Activated CD4-positive, alpha-beta T cell treated with anti-CD3 and anti-CD28 coated beads for 36 hours (primary cell): ENCODE measurements at regions of chr16 and their contacts with region 1.

Region 1: DNA sequence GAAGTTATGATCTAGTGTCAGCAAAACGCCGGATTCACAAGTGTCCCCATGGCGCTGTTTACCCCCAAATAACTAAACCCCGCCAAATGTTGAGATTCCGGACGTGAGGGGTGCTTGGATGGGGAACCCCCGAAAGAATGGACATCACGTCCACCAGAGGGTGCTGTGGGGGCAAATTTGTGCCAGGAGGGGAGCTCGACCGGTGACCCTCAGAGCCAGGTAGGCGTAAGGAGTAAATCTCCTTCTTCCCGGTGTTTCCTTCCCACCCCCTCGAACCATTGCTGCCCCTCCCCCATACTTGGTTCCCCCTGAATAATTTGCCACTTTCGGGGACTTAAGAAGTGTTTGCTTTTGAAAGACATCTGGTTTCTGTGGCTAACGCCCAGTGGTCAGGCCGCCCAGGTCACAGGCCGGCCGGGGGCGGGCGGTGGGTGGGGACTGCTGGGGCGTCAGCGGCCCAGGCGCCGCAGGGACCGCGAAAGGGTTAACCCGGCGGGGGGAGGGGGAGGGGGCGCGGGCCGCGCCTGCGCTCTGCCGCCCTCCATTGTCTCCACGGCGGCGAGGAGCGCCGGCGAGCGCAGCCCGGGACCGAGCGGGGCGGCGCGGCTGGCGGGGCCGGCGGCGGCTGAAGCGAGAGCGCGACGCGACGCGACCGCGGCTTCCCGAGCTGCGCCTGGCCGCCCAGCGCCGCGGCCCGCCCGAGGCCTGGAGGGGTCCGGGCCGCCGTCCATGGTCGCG is at the start of gene ZNRF1:
- DNase-seq: peak; percentile 91
- ATAC-seq: peak; percentile 80
- H3K4me3 Mint-ChIP-seq: peak within 1 kb of the TSS; percentile 87
- H3K27ac Mint-ChIP-seq: peak within 1 kb of the TSS; percentile 75
- H3K4me1 Mint-ChIP-seq: peaks cover 39% of the 10 kb centered on the region
- H3K27me3 Mint-ChIP-seq: peaks cover 4% of the 10 kb centered on the region
- total RNA-seq, gene ZNRF1: 35.2 to 42.9 TPM

Region 2: GRCh38 chr16:75074920-75075687 is 76.5 kb after region 1 on chr16:
- CTCF ChIA-PET with region 1: interaction called, 6 read pairs
- POLR2A ChIA-PET with region 1: no interaction called
- intact Hi-C with region 1: loop called (anchors 1 to 2 kb)
- DNase-seq: peak; percentile 89
- ATAC-seq: peak; percentile 92
- H3K4me3 Mint-ChIP-seq: peak overlapping the region; percentile 54
- H3K27ac Mint-ChIP-seq: peak overlapping the region; percentile 97
- H3K4me1 Mint-ChIP-seq: peaks cover 62% of the 10 kb centered on the region
- H3K27me3 Mint-ChIP-seq: no peaks in the 10 kb centered on the region

Region 3: DNA sequence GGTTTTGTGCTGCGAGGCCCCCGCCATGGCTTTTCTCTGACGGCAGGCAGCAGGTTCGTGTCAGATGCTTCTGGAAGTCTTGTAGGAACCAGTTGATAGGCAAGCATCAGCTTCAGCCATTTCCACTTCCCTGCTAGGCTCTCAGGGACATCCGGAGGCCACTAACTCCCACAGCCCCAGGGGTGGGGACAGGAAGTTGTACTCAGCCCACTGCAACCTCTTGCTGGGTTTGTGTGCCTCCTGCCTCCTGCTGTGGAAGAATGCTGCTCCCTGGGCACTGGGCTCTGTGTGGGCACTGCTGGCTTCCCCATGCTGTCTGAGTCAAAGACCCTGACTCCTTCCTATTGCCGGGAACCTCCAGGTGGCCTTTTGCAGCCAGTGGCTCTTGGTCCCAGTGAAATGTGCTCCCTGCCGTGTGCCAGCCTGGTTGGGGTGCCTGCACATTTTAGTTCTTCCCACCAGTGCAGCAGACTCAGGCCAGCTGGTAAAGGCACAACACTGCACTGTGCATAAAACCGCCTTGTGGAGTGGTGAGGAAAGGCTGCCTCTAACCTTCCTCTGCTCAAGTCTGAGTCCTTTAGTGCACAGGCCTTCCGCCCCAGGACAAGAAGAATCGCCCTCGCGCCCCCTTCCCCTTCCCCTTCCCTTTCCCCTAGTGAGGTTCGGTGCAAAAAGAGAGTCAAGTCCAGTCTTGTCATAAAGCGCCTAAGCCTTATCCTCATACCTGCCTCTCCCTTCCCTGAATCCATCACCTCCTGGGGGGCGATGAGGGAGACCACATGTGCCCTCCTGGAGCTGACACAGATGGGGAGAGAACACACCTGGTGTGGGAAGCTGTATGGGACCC is 101.3 kb after region 1 on chr16:
- CTCF ChIA-PET with region 1: interaction called, 11 read pairs
- POLR2A ChIA-PET with region 1: no interaction called
- intact Hi-C with region 1: no loop called
- DNase-seq: peak; percentile 68
- ATAC-seq: peak; percentile 45
- H3K4me3 Mint-ChIP-seq: peak overlapping the region; percentile 26
- H3K27ac Mint-ChIP-seq: peak overlapping the region; percentile 88
- H3K4me1 Mint-ChIP-seq: peaks cover 64% of the 10 kb centered on the region
- H3K27me3 Mint-ChIP-seq: no peaks in the 10 kb centered on the region